Activated B cell treated with CpG ODN at 0.5 μM for 24 hours (primary cell): ENCODE measurements at regions of chr16 and their contacts with region 1.

Region 1: GRCh38 chr16:89909777-89910716 is 8.6 kb upstream of the MC1R start:
- DNase-seq: peak; percentile 64
- ATAC-seq: peak; percentile 85
- H3K4me3 Mint-ChIP-seq: no peak overlapping the region
- H3K27ac Mint-ChIP-seq: no peak overlapping the region
- H3K4me1 Mint-ChIP-seq: peaks cover 5% of the 10 kb centered on the region
- H3K27me3 Mint-ChIP-seq: no peaks in the 10 kb centered on the region
- CTCF ChIP-seq: peak; percentile 82

Region 2: GRCh38 chr16:89422905-89423630 is 487.0 kb before region 1 on chr16:
- CTCF ChIA-PET with region 1: no interaction called
- POLR2A ChIA-PET with region 1: no interaction called
- intact Hi-C with region 1: no loop called
- DNase-seq: no peak
- ATAC-seq: peak; percentile 77
- H3K4me3 Mint-ChIP-seq: peak overlapping the region; percentile 67
- H3K27ac Mint-ChIP-seq: peak overlapping the region; percentile 71
- H3K4me1 Mint-ChIP-seq: peaks cover 75% of the 10 kb centered on the region
- H3K27me3 Mint-ChIP-seq: no peaks in the 10 kb centered on the region
- CTCF ChIP-seq: no peak

Region 3: DNA sequence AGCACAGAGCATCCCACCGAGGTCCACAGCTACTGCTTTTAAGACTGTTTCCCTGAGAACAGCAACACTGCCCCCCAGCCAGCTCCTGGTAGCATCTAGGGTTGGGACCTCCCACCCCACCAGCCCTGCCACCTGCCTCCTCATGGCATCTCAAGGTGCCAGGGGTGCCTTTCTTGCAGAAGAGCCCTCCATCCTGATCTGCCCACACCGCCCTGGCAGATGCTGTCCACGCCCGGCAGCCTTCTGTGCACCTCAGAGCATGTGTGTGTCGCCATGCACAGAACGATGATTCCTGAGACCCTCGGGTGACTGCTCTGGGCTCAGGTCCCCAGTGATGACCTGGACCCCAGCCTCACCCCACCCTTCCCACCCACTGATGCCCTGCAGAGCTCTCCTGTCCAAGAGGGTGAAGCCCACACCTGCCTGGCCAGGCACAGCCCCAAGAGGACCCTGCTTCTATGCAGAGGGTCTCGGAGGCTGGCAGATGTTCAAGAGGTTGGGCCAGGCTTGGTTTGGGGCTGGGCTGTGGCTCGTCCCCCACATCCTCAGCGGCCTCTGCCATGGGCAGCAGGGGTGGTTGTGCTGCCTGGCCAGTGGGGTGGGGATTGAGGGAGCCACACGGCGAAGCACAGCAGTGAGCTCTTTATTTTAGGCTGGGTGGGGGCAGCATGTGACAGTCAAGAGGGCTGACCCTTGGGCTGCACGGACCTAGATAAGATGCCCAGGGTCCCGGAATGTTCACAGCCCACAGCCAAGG is 203.4 kb before region 1 on chr16:
- CTCF ChIA-PET with region 1: interaction called, 10 read pairs
- POLR2A ChIA-PET with region 1: interaction called, 4 read pairs
- intact Hi-C with region 1: loop called (anchors 1 kb)
- DNase-seq: no peak
- ATAC-seq: no peak
- H3K4me3 Mint-ChIP-seq: no peak overlapping the region
- H3K27ac Mint-ChIP-seq: no peak overlapping the region
- H3K4me1 Mint-ChIP-seq: peaks cover 15% of the 10 kb centered on the region
- H3K27me3 Mint-ChIP-seq: no peaks in the 10 kb centered on the region
- CTCF ChIP-seq: no peak

Region 4: DNA sequence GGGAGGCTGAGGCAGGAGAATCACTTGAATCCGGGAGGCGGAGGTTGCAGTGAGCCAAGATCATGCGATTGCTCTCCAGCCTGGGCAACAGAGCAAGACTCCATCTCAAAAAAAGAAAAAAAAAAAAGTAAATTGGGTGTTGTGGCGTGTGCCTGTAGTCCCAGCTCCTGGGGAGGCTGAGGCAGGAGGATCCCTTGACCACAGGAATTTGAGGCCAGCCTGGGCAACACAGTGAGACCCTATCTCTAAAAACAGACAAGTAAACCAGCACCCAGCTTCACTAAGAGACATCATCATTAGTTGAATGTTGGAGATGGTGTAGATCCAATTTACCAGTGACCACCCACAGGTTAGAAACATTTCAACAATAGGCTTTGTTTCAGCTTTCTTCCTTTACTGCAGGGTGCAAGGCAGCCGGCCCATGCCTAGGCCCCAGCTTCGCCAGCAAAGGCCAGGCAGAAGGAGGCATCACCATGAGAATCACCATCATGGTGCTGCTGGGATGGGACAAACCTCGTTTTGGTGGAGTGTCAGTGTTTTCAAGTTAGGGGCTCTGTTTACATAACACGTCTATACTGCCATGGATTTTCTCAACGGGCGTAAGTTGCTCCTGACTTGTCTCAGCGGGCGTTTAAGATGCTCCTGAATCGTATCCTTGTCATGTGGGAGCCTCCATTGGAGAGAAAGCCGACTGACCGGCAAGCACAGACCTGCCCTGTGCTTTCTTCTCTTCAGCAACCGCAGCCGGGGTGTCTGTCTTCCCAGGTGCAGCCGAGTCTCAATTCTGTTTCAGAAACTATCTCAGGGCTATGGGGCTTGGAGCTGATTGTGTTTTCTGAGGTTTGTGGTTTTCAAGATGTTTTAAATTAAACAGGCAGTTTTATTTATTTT is 29.3 kb before region 1 on chr16:
- CTCF ChIA-PET with region 1: no interaction called
- POLR2A ChIA-PET with region 1: no interaction called
- intact Hi-C with region 1: loop called (anchors 2 kb)
- DNase-seq: no peak
- ATAC-seq: no peak
- H3K4me3 Mint-ChIP-seq: no peak overlapping the region
- H3K27ac Mint-ChIP-seq: no peak overlapping the region
- H3K4me1 Mint-ChIP-seq: no peaks in the 10 kb centered on the region
- H3K27me3 Mint-ChIP-seq: no peaks in the 10 kb centered on the region
- CTCF ChIP-seq: no peak